PC-3 (cell line): ENCODE measurements at regions of chr4 and their contacts with region 1.

Region 1: DNA sequence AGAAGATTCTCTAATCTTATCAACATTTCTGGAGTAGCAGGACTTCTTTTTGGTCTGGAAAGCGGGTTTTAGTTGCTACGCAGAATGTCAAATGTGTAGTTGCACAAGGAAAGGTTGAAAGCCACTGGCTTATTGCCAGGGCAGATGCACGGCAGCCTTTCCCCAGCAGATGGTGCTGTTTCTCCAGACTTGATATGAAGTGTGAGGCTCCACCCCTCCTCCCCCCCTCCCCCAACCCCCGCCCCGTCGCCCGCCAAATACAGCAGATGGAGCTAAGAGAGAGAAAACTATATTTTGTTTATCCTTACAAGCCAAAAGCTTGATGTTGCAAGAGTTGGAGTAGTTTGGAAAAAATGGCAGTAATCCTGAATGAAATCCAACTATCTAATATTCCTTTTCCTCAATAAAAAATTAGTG is 32.0 kb downstream of the ENOPH1 start:
- DNase-seq: peak; percentile 88
- ATAC-seq: no peak
- H3K4me3 ChIP-seq: no peak overlapping the region
- H3K27ac ChIP-seq: no peak overlapping the region
- H3K4me1 ChIP-seq: no peaks in the 10 kb centered on the region
- H3K27me3 ChIP-seq: no peaks in the 10 kb centered on the region
- CTCF ChIP-seq: peak; percentile 54; the same call in 1 of the 2 replicates

Region 2: DNA sequence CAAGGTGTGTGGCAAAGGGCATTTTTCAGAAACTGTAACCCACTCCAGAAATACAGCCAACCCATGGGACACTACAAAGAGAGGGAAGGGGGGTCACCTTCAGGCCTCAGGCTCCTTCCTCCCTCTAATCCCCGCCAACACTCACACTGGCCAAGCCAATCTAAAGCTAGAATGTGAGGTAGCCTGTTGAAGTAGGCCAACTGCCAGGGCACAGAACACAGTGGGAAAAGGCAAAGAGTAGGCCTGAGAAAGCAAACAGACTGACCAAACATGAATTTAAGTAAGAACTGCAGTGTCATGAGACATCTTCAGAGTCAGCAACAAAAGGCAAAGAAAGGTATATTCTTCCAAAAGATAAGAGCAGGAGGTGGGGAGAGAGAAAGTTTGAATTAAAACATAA is 377.7 kb before region 1 on chr4:
- CTCF ChIA-PET with region 1: no interaction called
- POLR2A ChIA-PET with region 1: no interaction called
- intact Hi-C with region 1: no loop called
- DNase-seq: no peak
- ATAC-seq: no peak
- H3K4me3 ChIP-seq: no peak overlapping the region
- H3K27ac ChIP-seq: no peak overlapping the region
- H3K4me1 ChIP-seq: no peaks in the 10 kb centered on the region
- H3K27me3 ChIP-seq: peaks cover 7% of the 10 kb centered on the region; the same call in 1 of the 2 replicates
- CTCF ChIP-seq: no peak

Region 3: DNA sequence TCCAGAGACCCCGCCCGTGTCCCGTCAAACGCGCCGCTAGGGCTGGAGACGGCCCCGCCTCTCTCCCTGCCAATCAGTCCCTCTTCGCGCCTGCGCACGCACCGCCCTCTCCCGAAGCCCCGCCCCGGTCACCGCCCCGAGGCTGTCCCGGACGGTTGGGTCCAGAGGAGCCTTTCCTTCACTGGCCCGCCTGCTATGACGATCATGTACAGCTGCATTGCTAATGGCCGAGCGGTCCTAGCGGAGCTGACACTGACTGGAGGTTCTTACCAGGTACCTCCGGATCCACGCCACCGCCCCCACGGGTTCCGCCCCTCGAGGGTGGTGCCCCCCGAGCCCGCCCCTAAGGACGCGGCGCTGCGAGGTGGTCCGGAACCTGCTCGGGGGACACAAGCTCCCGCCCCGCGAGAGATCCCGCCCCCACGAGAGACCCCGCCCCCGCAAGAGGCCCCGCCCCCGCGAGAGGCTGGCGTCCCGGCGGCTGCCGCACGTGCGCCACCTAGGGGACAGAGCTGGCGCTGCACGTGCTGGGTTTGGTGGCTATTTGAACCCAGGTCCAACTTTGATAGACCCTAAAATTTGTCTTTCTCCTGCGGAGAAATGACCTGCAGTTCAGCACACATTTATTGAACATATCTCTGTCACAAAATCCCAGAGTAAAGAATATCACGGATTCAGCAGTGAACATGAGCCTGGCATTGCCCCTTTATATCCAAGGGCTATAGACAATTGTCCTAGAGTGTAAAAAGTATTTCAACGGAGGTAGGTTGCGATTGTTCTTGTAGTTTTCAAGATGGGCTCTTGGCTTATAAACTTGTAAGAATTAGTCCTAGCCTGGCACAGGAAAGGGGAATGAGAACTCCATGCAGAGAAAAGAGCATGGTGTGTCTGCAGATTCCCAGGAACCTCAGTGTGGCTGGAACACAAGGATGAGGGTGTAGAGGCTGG is 177.3 kb before region 1 on chr4:
- CTCF ChIA-PET with region 1: no interaction called
- POLR2A ChIA-PET with region 1: no interaction called
- intact Hi-C with region 1: no loop called
- DNase-seq: peak; percentile 96
- ATAC-seq: peak; percentile 100
- H3K4me3 ChIP-seq: peak overlapping the region; percentile 65
- H3K27ac ChIP-seq: no peak overlapping the region
- H3K4me1 ChIP-seq: no peaks in the 10 kb centered on the region
- H3K27me3 ChIP-seq: no peaks in the 10 kb centered on the region
- CTCF ChIP-seq: peak; percentile 72

Region 4: GRCh38 chr4:82352913-82353366 is 109.5 kb before region 1 on chr4:
- CTCF ChIA-PET with region 1: no interaction called
- POLR2A ChIA-PET with region 1: no interaction called
- intact Hi-C with region 1: no loop called
- DNase-seq: no peak
- ATAC-seq: no peak
- H3K4me3 ChIP-seq: no peak overlapping the region
- H3K27ac ChIP-seq: no peak overlapping the region
- H3K4me1 ChIP-seq: no peaks in the 10 kb centered on the region
- H3K27me3 ChIP-seq: no peaks in the 10 kb centered on the region
- CTCF ChIP-seq: no peak

Region 5: GRCh38 chr4:82373816-82374625 is 88.4 kb before region 1 on chr4 and contains the start of gene HNRNPD:
- CTCF ChIA-PET with region 1: no interaction called
- POLR2A ChIA-PET with region 1: no interaction called
- intact Hi-C with region 1: loop called (anchors 1 kb)
- DNase-seq: peak; percentile 96
- ATAC-seq: peak; percentile 89
- H3K4me3 ChIP-seq: peak within 1 kb of the TSS; percentile 97
- H3K27ac ChIP-seq: peak within 1 kb of the TSS; percentile 87
- H3K4me1 ChIP-seq: peaks cover 19% of the 10 kb centered on the region
- H3K27me3 ChIP-seq: no peaks in the 10 kb centered on the region
- CTCF ChIP-seq: no peak
- total RNA-seq, gene HNRNPD: 86.4 and 136 TPM in 2 replicates

Region 6: GRCh38 chr4:82450966-82451755 is 11.3 kb before region 1 on chr4:
- CTCF ChIA-PET with region 1: interaction called, 10 read pairs
- POLR2A ChIA-PET with region 1: no interaction called
- intact Hi-C with region 1: no loop called
- DNase-seq: no peak
- ATAC-seq: no peak
- H3K4me3 ChIP-seq: no peak overlapping the region
- H3K27ac ChIP-seq: no peak overlapping the region
- H3K4me1 ChIP-seq: no peaks in the 10 kb centered on the region
- H3K27me3 ChIP-seq: no peaks in the 10 kb centered on the region
- CTCF ChIP-seq: no peak

Region 7: GRCh38 chr4:82508011-82508410 is 45.6 kb after region 1 on chr4:
- CTCF ChIA-PET with region 1: no interaction called
- POLR2A ChIA-PET with region 1: no interaction called
- intact Hi-C with region 1: no loop called
- DNase-seq: no peak
- ATAC-seq: no peak
- H3K4me3 ChIP-seq: no peak overlapping the region
- H3K27ac ChIP-seq: no peak overlapping the region
- H3K4me1 ChIP-seq: no peaks in the 10 kb centered on the region
- H3K27me3 ChIP-seq: no peaks in the 10 kb centered on the region
- CTCF ChIP-seq: no peak

Region 8: GRCh38 chr4:82739316-82740179 is 277.1 kb after region 1 on chr4:
- CTCF ChIA-PET with region 1: interaction called, 9 read pairs
- POLR2A ChIA-PET with region 1: no interaction called
- intact Hi-C with region 1: loop called (anchors 1 kb)
- DNase-seq: peak; percentile 77
- ATAC-seq: peak; percentile 99
- H3K4me3 ChIP-seq: no peak overlapping the region
- H3K27ac ChIP-seq: no peak overlapping the region
- H3K4me1 ChIP-seq: no peaks in the 10 kb centered on the region
- H3K27me3 ChIP-seq: no peaks in the 10 kb centered on the region
- CTCF ChIP-seq: peak; percentile 94

Region 9: GRCh38 chr4:82801910-82802521 is 339.6 kb after region 1 on chr4:
- CTCF ChIA-PET with region 1: interaction called, 5 read pairs
- POLR2A ChIA-PET with region 1: interaction called, 3 read pairs
- intact Hi-C with region 1: loop called (anchors 2 kb)
- DNase-seq: peak; percentile 49
- ATAC-seq: peak; percentile 43
- H3K4me3 ChIP-seq: no peak overlapping the region
- H3K27ac ChIP-seq: no peak overlapping the region
- H3K4me1 ChIP-seq: 0 out of 2 replicates have a peak, but pooled peaks cover 3% of the 10 kb centered on the region
- H3K27me3 ChIP-seq: peaks cover 6% of the 10 kb centered on the region
- CTCF ChIP-seq: peak; percentile 69